A549 (cell line): ENCODE measurements at regions of chr21 and their contacts with region 1.

Region 1: GRCh38 chr21:40512590-40512989 is 334.4 kb downstream of the DSCAM start:
- DNase-seq: no peak
- ATAC-seq: no peak
- H3K4me3 ChIP-seq: no peak overlapping the region
- H3K27ac ChIP-seq: peak overlapping the region in 1 of 2 experiments; percentile 23; a peak in 1 of 6 replicates
- H3K4me1 ChIP-seq: peaks cover 38% of the 10 kb centered on the region; the same call in 2 of the 3 replicates
- CTCF ChIP-seq: peak; percentile 23; the same call in 2 of the 3 replicates
- EP300 ChIP-seq: no peak
- POLR2A ChIP-seq: no peak
- RAD21 ChIP-seq: peak in 1 of 2 experiments; percentile 43; a peak in 2 of 5 replicates

Region 2: DNA sequence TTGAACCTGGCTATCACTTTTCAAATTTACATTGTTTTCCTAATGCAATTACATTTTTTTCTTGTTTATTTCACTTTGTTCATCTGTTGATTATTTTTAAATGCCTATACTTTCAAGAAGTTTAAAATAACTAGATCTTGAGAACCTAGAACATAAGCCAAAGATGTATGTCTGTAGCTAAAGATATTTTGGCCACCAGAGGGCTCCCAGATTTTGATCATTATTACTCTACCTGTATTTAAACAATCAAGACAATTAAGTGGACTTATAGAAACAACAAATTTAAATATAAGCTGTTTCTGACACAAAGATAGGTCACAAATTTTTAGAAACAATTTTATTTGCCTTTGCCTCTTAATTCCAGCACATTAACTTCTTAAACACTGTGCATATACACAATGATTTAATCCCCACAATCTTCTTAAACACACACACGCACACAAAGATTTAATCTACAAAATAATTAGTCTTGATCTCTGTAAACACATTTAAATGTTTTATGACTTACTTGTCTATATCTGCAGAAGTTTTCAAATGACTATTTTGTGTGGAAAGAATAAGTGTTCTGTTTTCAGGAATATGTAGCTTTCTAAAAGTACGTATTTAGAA is 45.6 kb before region 1 on chr21:
- CTCF ChIA-PET with region 1: interaction called, 13 read pairs
- POLR2A ChIA-PET with region 1: no interaction called
- DNase-seq: peak in 1 of 2 experiments; percentile 9
- ATAC-seq: no peak
- H3K4me3 ChIP-seq: no peak overlapping the region
- H3K27ac ChIP-seq: no peak overlapping the region
- H3K4me1 ChIP-seq: no peaks in the 10 kb centered on the region
- CTCF ChIP-seq: peak; percentile 50
- EP300 ChIP-seq: no peak
- POLR2A ChIP-seq: no peak
- RAD21 ChIP-seq: peak; percentile 32 to 53; a peak in 4 of 5 replicates

Region 3: GRCh38 chr21:40696246-40696645 is 183.7 kb after region 1 on chr21:
- CTCF ChIA-PET with region 1: no interaction called
- POLR2A ChIA-PET with region 1: no interaction called
- DNase-seq: no peak
- ATAC-seq: no peak
- H3K4me3 ChIP-seq: no peak overlapping the region
- H3K27ac ChIP-seq: no peak overlapping the region
- H3K4me1 ChIP-seq: no peaks in the 10 kb centered on the region
- CTCF ChIP-seq: no peak
- EP300 ChIP-seq: no peak
- POLR2A ChIP-seq: no peak
- RAD21 ChIP-seq: no peak